HEK293 (cell line): ENCODE measurements at regions of chr2 and their contacts with region 1.

Region 1: GRCh38 chr2:95043300-95044093 is 18.0 kb downstream of the MAL start:
- H3K4me3 ChIP-seq: no peak overlapping the region
- H3K27ac ChIP-seq: no peak overlapping the region
- H3K4me1 ChIP-seq: no peaks in the 10 kb centered on the region
- CTCF ChIP-seq: no peak

Region 2: DNA sequence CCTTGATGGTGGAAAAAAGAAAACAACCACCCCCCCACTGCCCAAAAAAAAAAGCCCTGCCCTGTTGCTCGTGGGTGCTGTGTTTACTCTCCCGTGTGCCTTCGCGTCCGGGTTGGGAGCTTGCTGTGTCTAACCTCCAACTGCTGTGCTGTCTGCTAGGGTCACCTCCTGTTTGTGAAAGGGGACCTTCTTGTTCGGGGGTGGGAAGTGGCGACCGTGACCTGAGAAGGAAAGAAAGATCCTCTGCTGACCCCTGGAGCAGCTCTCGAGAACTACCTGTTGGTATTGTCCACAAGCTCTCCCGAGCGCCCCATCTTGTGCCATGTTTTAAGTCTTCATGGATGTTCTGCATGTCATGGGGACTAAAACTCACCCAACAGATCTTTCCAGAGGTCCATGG is 10.0 kb after region 1 on chr2:
- CTCF ChIA-PET with region 1: interaction called, 10 read pairs
- POLR2A ChIA-PET with region 1: no interaction called
- H3K4me3 ChIP-seq: no peak overlapping the region
- H3K27ac ChIP-seq: no peak overlapping the region
- H3K4me1 ChIP-seq: no peaks in the 10 kb centered on the region
- CTCF ChIP-seq: no peak